ENCODE measurements at regions of chr9 and their contacts with region 1.

Region 1: GRCh38 chr9:35646533-35647265 is 4.0 kb downstream of the SIT1 start:
- DNase-seq: peak; percentile 91
- H3K4me3 ChIP-seq: peak overlapping the region; percentile 41 to 52
- H3K27ac ChIP-seq: peak overlapping the region; percentile 84 to 86
- H3K4me1 ChIP-seq: peaks cover 4% of the 10 kb centered on the region
- H3K27me3 ChIP-seq: no peaks in the 10 kb centered on the region
- CTCF ChIP-seq: peak; percentile 89 to 99 (median 95)
- POLR2A ChIP-seq: peak; percentile 85

Region 2: DNA sequence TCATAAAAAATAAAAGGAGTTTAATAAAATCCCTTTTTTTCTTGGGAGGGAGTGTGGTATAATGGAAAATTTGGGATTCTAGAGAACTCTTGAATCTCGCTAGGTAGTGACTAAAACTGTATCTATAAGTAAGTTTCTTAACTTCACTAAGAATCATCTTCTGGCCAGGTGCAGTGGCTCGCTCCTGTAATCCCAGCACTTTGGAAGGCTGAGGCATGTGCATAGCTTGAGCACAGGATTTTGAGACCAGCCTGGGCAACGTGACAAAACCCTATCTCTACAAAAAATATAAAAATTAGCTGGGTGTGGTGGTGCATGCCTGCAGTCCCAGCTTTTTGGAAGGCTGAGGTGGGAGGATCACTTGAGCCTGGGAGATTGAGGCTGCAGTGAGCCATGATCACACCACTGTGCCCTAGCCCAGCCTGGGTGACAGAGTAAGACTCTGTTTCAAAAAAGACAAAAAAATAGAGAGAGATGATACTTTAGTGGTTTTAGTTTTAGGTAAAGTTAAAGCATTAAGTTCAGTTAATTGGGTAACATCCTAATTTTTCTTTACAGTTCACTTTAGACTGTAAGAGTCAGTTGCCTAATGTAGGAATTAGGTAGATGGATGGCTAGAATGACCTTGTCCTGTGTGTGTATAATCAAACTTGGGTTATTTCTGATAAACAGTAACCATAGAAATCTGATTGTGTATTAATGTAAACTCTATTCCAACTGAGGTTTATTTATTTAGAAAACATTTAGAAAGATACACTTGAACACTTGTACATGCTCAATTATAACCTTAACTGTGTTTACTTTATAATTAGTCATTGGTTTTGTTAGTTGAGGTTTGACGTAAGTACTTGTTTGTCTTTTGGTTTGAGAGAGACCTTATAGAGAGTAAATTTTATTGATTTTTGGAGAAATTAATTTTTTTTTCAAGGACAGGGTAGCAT is 467.1 kb before region 1 on chr9:
- intact Hi-C with region 1: no loop called
- DNase-seq: no peak
- H3K4me3 ChIP-seq: no peak overlapping the region
- H3K27ac ChIP-seq: no peak overlapping the region
- H3K4me1 ChIP-seq: no peaks in the 10 kb centered on the region
- H3K27me3 ChIP-seq: no peaks in the 10 kb centered on the region
- CTCF ChIP-seq: no peak
- POLR2A ChIP-seq: no peak

Region 3: DNA sequence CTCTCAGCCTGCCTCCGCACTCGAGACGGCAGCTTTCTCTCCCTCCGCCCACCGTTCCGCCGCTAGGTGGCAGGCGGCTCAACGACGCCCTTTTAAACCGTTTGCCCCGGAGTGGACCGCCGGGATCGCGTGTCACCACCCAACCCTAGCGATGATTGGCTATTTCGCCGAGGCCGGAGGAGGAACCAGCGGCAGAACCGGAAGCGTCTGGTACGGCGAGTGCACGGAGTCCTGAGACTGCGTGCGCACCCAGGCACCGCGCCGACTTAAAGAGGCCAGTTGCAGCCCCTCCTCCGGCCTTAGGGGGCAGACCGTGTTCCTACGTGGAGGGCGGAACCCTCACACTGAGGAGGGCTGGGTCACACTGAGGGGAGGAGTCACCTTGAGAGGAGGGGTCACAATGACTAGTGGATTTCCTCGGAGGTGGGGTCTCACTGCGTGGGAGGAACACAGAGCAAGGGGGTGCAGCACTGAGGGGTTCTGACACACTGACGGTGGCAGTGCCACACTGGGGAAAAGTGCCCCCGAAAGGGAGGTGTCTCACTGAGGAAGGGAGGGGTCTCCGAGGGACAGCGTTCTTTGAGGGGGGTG is 42.6 kb before region 1 on chr9:
- intact Hi-C with region 1: loop called (anchors 5 kb)
- DNase-seq: peak; percentile 100
- H3K4me3 ChIP-seq: peak overlapping the region; percentile 79 to 82
- H3K27ac ChIP-seq: peak overlapping the region; percentile 94
- H3K4me1 ChIP-seq: peaks cover 13% of the 10 kb centered on the region
- H3K27me3 ChIP-seq: no peaks in the 10 kb centered on the region
- CTCF ChIP-seq: peak; percentile 90 to 99 (median 99)
- POLR2A ChIP-seq: peak; percentile 90